A673 (cell line): ENCODE measurements at regions of chr5 and their contacts with region 1.

Region 1: GRCh38 chr5:78294248-78295034 is at the start of gene AP3B1:
- DNase-seq: peak; percentile 99
- H3K4me3 ChIP-seq: peak within 1 kb of the TSS; percentile 86
- H3K27ac ChIP-seq: peak within 1 kb of the TSS; percentile 92
- H3K4me1 ChIP-seq: peaks cover 16% of the 10 kb centered on the region
- H3K27me3 ChIP-seq: no peaks in the 10 kb centered on the region
- CTCF ChIP-seq: no peak
- total RNA-seq, gene AP3B1: 45.3 and 52.7 TPM in 2 replicates

Region 2: DNA sequence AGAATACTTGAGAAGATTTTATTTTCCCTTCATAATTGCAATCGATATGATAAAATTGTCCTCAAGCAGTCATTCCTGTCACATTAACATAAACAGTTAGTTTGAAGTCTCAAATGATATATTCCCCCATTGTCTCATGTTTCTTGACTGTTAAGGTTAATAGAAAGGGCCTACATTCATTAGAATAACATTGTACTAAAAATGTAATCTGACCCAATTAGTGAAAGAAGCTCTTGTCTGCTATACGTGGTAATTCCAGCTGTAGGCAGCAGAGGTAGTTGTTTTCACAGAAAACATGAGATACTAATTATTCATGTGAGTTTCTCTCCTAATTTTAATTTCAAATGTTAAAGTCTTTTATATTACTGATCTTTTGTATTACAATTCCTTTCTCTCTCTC is 26.0 kb after region 1 on chr5:
- CTCF ChIA-PET with region 1: no interaction called
- POLR2A ChIA-PET with region 1: no interaction called
- intact Hi-C with region 1: no loop called
- DNase-seq: peak; percentile 48
- H3K4me3 ChIP-seq: no peak overlapping the region
- H3K27ac ChIP-seq: no peak overlapping the region
- H3K4me1 ChIP-seq: peaks cover 5% of the 10 kb centered on the region
- H3K27me3 ChIP-seq: no peaks in the 10 kb centered on the region
- CTCF ChIP-seq: peak; percentile 72

Region 3: DNA sequence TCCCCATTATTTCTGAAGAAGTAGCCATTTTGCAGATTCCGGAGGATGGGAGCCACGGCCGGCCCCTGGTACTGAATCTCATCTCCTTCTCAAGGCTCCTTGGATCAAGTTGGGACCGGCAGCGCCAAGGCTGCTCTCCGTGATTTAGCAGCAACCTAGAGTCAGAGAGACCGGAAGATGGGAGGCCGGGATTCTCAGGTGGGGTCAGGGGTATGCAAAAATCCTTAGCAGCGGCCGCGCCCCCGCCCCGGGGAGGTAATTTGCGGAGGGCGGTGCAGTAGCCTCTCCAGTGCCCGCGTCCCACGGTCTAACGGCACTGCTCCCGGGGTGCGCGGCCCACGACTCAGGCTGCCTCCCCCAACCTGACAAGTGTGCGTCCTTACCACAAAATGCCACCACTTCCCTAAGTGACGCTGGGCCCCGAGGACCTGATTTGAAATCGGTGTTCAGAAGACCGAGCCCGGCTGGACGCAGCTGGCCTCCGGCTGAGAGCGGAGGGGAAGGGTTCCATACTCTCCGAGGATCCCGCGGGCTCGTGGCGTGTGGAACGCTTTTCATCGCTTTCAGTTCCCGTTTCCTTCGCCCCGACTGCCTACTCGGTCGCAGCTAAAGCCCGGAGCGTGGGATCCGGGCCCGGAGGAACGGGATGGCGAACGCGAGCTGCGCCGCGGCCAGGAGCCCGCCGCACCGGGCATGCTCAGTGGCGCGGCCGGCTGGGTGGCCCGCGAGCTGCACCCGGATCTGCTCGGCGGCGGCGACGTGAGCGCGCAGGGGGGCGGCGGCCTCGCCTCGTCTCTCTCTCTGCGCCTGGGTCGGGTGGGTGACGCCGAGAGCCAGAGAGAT is 65.6 kb after region 1 on chr5 and contains the start of gene SCAMP1:
- CTCF ChIA-PET with region 1: no interaction called
- POLR2A ChIA-PET with region 1: no interaction called
- intact Hi-C with region 1: loop called (anchors 1 kb)
- DNase-seq: peak; percentile 95
- H3K4me3 ChIP-seq: peak within 1 kb of the TSS; percentile 78
- H3K27ac ChIP-seq: peak within 1 kb of the TSS; percentile 89
- H3K4me1 ChIP-seq: peaks cover 13% of the 10 kb centered on the region
- H3K27me3 ChIP-seq: no peaks in the 10 kb centered on the region
- CTCF ChIP-seq: 0 out of 2 replicates have a peak, but pooled peaks have one; percentile 15
- total RNA-seq, gene SCAMP1: 28.7 and 30.2 TPM in 2 replicates